ENCODE measurements at regions of chr14 and their contacts with region 1.

Region 1: GRCh38 chr14:22766456-22767322 is at the start of gene OXA1L:
- DNase-seq: peak; percentile 100
- ATAC-seq: peak; percentile 90
- H3K4me3 ChIP-seq: peak within 1 kb of the TSS; percentile 72 to 96 (median 83)
- H3K27ac ChIP-seq: peak within 1 kb of the TSS; percentile 74
- H3K4me1 ChIP-seq: peaks cover 22% of the 10 kb centered on the region
- H3K27me3 ChIP-seq: no peaks in the 10 kb centered on the region; a peak in 1 of 5 replicates
- CTCF ChIP-seq: peak; percentile 37
- EP300 ChIP-seq: peak in 1 of 2 experiments; percentile 52; a peak in 1 of 4 replicates
- POLR2A ChIP-seq: peak; percentile 98
- RAD21 ChIP-seq: peak; percentile 13
- total RNA-seq, gene OXA1L: 216 and 230 TPM in 2 replicates

Region 2: GRCh38 chr14:22472935-22473854 is 293.5 kb before region 1 on chr14:
- CTCF ChIA-PET with region 1: no interaction called
- POLR2A ChIA-PET with region 1: no interaction called
- in situ Hi-C with region 1: no loop called
- intact Hi-C with region 1: no loop called
- DNase-seq: peak; percentile 56
- ATAC-seq: peak; percentile 65
- H3K4me3 ChIP-seq: no peak overlapping the region
- H3K27ac ChIP-seq: no peak overlapping the region
- H3K4me1 ChIP-seq: no peaks in the 10 kb centered on the region
- H3K27me3 ChIP-seq: peaks cover 0 to 4% of the 10 kb centered on the region in 2 experiments; a peak in 1 of 5 replicates
- CTCF ChIP-seq: peak; percentile 75
- EP300 ChIP-seq: no peak
- POLR2A ChIP-seq: no peak
- RAD21 ChIP-seq: peak; percentile 67

Region 3: GRCh38 chr14:22589096-22589839 is 177.4 kb before region 1 on chr14 and contains the start of gene DAD1:
- CTCF ChIA-PET with region 1: no interaction called
- POLR2A ChIA-PET with region 1: interaction called, 34 read pairs
- in situ Hi-C with region 1: no loop called
- intact Hi-C with region 1: no loop called
- DNase-seq: peak; percentile 100
- ATAC-seq: peak; percentile 98
- H3K4me3 ChIP-seq: peak within 1 kb of the TSS; percentile 85 to 92 (median 86)
- H3K27ac ChIP-seq: peak within 1 kb of the TSS; percentile 80
- H3K4me1 ChIP-seq: peaks cover 52% of the 10 kb centered on the region
- H3K27me3 ChIP-seq: peaks cover 0 to 23% of the 10 kb centered on the region in 2 experiments; a peak in 2 of 5 replicates
- CTCF ChIP-seq: no peak
- EP300 ChIP-seq: 0 out of 4 replicates have a peak, but pooled peaks of 1 of the 2 experiments have one; percentile 19
- POLR2A ChIP-seq: peak in 1 of 2 experiments; percentile 97; a peak in 2 of 4 replicates
- RAD21 ChIP-seq: peak; percentile 67; the same call in 1 of the 2 replicates
- total RNA-seq, gene DAD1: 385 and 558 TPM in 2 replicates

Region 4: GRCh38 chr14:22715186-22715812 is 51.4 kb before region 1 on chr14:
- CTCF ChIA-PET with region 1: no interaction called
- POLR2A ChIA-PET with region 1: interaction called, 6 read pairs
- in situ Hi-C with region 1: no loop called
- intact Hi-C with region 1: loop called (anchors 5 kb)
- DNase-seq: no peak
- ATAC-seq: no peak; the same call in 2 of the 3 replicates
- H3K4me3 ChIP-seq: no peak overlapping the region
- H3K27ac ChIP-seq: no peak overlapping the region
- H3K4me1 ChIP-seq: peaks cover 13% of the 10 kb centered on the region
- H3K27me3 ChIP-seq: peaks cover 0 to 13% of the 10 kb centered on the region in 2 experiments; a peak in 1 of 5 replicates
- CTCF ChIP-seq: no peak
- EP300 ChIP-seq: no peak
- POLR2A ChIP-seq: no peak
- RAD21 ChIP-seq: no peak

Region 5: DNA sequence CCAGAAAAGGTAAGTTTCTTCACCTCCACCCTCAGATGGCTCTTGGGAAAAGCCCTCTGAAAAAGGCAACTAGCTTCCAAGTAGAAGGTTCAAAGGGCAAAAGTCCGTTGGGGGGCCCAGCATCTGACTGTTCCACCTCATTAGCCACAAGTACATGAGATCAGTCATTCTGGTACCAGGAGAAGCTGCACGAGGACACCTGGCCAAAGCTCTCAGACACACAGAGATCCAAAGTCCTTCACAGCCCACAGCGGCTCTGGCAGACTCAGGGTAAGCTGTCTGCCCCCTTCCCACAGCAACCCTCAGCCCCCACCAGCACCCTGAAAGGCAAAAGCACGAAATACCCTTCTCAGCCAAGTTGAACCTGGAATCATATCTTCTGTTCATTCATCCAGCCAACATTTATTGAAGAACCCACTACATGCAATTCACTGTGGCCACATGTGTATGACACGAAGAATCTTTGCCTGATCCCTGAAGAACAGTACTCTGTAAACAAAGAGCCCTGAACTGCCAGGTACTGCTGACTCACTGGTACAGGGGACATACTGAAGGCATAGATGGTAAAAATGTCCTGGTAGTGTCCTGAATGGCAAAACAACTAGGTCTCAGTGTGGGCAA is 29.5 kb after region 1 on chr14:
- CTCF ChIA-PET with region 1: no interaction called
- POLR2A ChIA-PET with region 1: interaction called, 26 read pairs
- in situ Hi-C with region 1: no loop called
- intact Hi-C with region 1: no loop called
- DNase-seq: peak; percentile 60
- ATAC-seq: peak; percentile 63
- H3K4me3 ChIP-seq: peak overlapping the region in 1 of 3 experiments; percentile 19; a peak in 2 of 6 replicates
- H3K27ac ChIP-seq: no peak overlapping the region
- H3K4me1 ChIP-seq: peaks cover 34% of the 10 kb centered on the region
- H3K27me3 ChIP-seq: no peaks in the 10 kb centered on the region
- CTCF ChIP-seq: no peak
- EP300 ChIP-seq: peak in 1 of 2 experiments; percentile 32; a peak in 1 of 4 replicates
- POLR2A ChIP-seq: no peak
- RAD21 ChIP-seq: no peak

Region 6: GRCh38 chr14:22829661-22830442 is 63.2 kb after region 1 on chr14 and contains the start of gene MRPL52:
- CTCF ChIA-PET with region 1: no interaction called
- POLR2A ChIA-PET with region 1: interaction called, 29 read pairs
- in situ Hi-C with region 1: no loop called
- intact Hi-C with region 1: no loop called
- DNase-seq: peak; percentile 97
- ATAC-seq: peak; percentile 94
- H3K4me3 ChIP-seq: peak within 1 kb of the TSS; percentile 74 to 97 (median 88)
- H3K27ac ChIP-seq: peak within 1 kb of the TSS; percentile 65
- H3K4me1 ChIP-seq: peaks cover 24% of the 10 kb centered on the region
- H3K27me3 ChIP-seq: no peaks in the 10 kb centered on the region; a peak in 1 of 5 replicates
- CTCF ChIP-seq: peak; percentile 37
- EP300 ChIP-seq: peak in 1 of 2 experiments; percentile 69; a peak in 1 of 4 replicates
- POLR2A ChIP-seq: peak; percentile 91 to 97
- RAD21 ChIP-seq: peak; percentile 53; the same call in 1 of the 2 replicates
- total RNA-seq, gene MRPL52: 329 and 420 TPM in 2 replicates

Region 7: GRCh38 chr14:22872033-22872832 is 105.5 kb after region 1 on chr14:
- CTCF ChIA-PET with region 1: no interaction called
- POLR2A ChIA-PET with region 1: interaction called, 23 read pairs
- in situ Hi-C with region 1: no loop called
- intact Hi-C with region 1: loop called (anchors 5 kb)
- DNase-seq: peak; percentile 84
- ATAC-seq: peak; percentile 62
- H3K4me3 ChIP-seq: peak overlapping the region; percentile 66 to 93 (median 82)
- H3K27ac ChIP-seq: peak overlapping the region; percentile 85
- H3K4me1 ChIP-seq: peaks cover 35% of the 10 kb centered on the region
- H3K27me3 ChIP-seq: no peaks in the 10 kb centered on the region; a peak in 1 of 5 replicates
- CTCF ChIP-seq: peak; percentile 99
- EP300 ChIP-seq: peak in 1 of 2 experiments; percentile 54; a peak in 2 of 4 replicates
- POLR2A ChIP-seq: no peak
- RAD21 ChIP-seq: peak; percentile 68

Region 8: DNA sequence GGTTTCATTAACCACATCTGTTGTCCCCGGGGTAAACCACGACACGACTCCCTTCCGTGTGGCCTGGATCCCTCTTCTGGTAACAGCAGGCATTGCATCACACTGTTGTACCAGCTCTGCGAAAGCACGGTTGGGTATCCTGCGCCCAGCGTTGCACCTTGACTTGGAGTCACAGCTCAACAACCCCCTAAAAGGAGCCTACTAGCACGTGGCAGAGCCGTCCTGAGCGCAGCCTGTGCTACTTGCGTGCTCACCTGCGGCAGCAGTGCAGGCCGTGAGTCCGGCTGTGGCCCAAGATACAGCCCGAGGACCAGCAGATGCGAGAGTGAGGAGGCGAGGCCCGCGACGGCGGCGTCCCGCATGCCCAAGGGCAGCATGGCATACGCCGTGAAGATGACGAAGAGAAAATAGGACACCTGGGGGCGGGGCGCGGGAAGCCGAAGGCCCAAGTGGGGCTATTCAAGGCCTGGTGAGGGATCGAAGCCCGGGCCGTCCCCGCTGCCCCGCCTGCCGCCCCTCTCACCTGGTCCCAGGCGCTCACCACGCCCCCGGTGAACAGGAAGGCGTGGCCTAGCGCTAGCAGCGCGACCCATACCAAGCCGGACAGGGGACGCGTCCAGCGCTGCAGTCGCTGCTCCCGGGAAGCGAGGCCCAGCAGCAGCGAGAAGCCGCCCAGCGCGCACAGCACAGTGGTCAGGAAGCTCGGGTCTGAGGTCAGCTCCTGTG is 1565.7 kb after region 1 on chr14:
- CTCF ChIA-PET with region 1: no interaction called
- POLR2A ChIA-PET with region 1: no interaction called
- in situ Hi-C with region 1: no loop called
- intact Hi-C with region 1: loop called (anchors 5 kb)
- DNase-seq: peak; percentile 86
- ATAC-seq: peak; percentile 83
- H3K4me3 ChIP-seq: peak overlapping the region; percentile 30 to 70 (median 42)
- H3K27ac ChIP-seq: no peak overlapping the region
- H3K4me1 ChIP-seq: peaks cover 36% of the 10 kb centered on the region
- H3K27me3 ChIP-seq: peaks cover 29 to 86% of the 10 kb centered on the region in 2 experiments
- CTCF ChIP-seq: peak; percentile 97
- EP300 ChIP-seq: 0 out of 4 replicates have a peak, but pooled peaks of 1 of the 2 experiments have one; percentile 19
- POLR2A ChIP-seq: no peak
- RAD21 ChIP-seq: peak; percentile 72